ENCODE measurements at regions of chr10 and their contacts with region 1.

Region 1: DNA sequence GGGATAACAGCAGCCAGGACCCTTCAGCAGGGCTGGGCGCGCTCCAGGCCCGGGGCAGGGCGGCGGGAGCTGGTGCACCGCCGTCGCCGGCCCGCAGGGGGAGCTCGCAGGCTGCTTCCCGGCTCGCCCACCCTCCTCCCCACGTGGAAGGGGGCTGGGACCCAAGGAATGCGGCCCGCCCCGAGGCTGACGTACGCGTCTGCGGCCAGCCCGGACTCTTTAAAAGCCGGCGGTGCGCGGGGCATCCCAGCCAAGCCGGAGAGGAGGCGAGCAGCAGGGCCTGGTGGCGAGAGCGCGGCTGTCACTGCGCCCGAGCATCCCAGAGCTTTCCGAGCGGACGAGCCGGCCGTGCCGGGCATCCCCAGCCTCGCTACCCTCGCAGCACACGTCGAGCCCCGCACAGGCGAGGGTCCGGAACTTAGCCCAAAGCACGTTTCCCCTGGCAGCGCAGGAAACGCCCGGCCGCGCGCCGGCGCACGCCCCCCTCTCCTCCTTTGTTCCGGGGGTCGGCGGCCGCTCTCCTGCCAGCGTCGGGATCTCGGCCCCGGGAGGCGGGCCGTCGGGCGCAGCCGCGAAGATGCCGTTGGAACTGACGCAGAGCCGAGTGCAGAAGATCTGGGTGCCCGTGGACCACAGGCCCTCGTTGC is at the start of gene PFKFB3:
- DNase-seq: peak; percentile 79 to 93 (median 86)
- ATAC-seq: peak; percentile 51 to 60
- H3K4me3 Mint-ChIP-seq: peak within 1 kb of the TSS; percentile 86 to 99 (median 96)
- H3K27ac Mint-ChIP-seq: peak within 1 kb of the TSS; percentile 82 to 97 (median 94)
- H3K4me1 Mint-ChIP-seq: peaks cover 11 to 32% (median 29%) of the 10 kb centered on the region in 4 donors
- H3K27me3 Mint-ChIP-seq: no peaks in the 10 kb centered on the region
- polyA plus RNA-seq, gene PFKFB3: 1.6 to 7.1 (median 4.8) TPM

Region 2: DNA sequence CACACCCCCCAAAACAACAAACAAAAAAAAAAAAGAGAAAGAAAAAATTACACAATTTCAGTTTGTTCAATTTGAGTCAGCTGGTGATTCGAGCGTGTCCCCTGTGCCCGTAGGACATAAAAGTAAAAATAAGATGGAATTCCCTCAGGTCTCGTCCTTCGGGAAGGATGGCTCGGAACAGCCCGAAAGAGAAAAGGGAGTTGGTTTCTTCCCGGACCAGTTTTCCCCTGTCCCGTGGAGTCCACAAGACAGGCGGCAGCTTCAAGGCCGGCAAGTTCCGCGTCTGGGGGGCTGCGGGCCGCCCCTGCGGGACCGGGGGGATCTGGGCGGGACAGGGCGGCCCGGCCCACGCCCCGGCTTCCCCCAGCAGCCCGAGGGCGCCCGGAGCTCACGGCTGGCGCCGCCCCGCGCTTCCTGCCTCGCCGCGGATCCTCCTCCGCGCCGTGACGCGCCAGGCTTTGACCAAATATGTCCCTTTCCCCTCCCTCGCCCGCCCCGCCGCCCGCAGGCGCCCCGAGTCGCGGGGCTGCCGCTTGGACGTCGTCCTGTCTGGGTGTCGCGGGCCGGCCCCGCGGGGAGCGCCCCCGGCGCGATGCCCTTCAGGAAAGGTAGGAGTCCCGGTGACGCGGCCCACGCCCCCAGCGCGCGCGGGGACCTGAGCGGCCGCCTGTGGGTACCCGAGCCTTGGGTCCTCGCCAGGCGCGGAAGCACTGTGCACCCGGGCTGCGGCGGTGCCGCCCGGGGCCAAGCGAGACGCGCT is 58.2 kb before region 1 on chr10:
- POLR2A ChIA-PET with region 1: interaction called, 31 read pairs
- DNase-seq: peak; percentile 77 to 91 (median 86)
- ATAC-seq: peak; percentile 90 to 94
- H3K4me3 Mint-ChIP-seq: peak overlapping the region; percentile 80 to 92 (median 86)
- H3K27ac Mint-ChIP-seq: peak overlapping the region; percentile 83 to 93 (median 90)
- H3K4me1 Mint-ChIP-seq: peaks cover 25 to 64% (median 60%) of the 10 kb centered on the region in 4 donors
- H3K27me3 Mint-ChIP-seq: peaks cover 0 to 1% (median 0%) of the 10 kb centered on the region in 5 donors

Region 3: GRCh38 chr10:6171881-6172695 is 30.7 kb before region 1 on chr10:
- POLR2A ChIA-PET with region 1: interaction called, 97 read pairs
- DNase-seq: no peak
- ATAC-seq: no peak
- H3K4me3 Mint-ChIP-seq: peak overlapping the region in 6 of 10 donors; percentile 20 to 78 (median 35)
- H3K27ac Mint-ChIP-seq: peak overlapping the region in 7 of 10 donors; percentile 48 to 94 (median 86)
- H3K4me1 Mint-ChIP-seq: peaks cover 45 to 93% (median 79%) of the 10 kb centered on the region in 4 donors
- H3K27me3 Mint-ChIP-seq: no peaks in the 10 kb centered on the region

Region 4: GRCh38 chr10:6348096-6348874 is 145.5 kb after region 1 on chr10:
- POLR2A ChIA-PET with region 1: interaction called, 63 read pairs
- DNase-seq: peak; percentile 63 to 96 (median 87)
- ATAC-seq: peak; percentile 90 to 92
- H3K4me3 Mint-ChIP-seq: peak overlapping the region; percentile 68 to 87 (median 78)
- H3K27ac Mint-ChIP-seq: peak overlapping the region; percentile 79 to 99 (median 95)
- H3K4me1 Mint-ChIP-seq: peaks cover 39 to 80% (median 63%) of the 10 kb centered on the region in 4 donors
- H3K27me3 Mint-ChIP-seq: no peaks in the 10 kb centered on the region

Region 5: DNA sequence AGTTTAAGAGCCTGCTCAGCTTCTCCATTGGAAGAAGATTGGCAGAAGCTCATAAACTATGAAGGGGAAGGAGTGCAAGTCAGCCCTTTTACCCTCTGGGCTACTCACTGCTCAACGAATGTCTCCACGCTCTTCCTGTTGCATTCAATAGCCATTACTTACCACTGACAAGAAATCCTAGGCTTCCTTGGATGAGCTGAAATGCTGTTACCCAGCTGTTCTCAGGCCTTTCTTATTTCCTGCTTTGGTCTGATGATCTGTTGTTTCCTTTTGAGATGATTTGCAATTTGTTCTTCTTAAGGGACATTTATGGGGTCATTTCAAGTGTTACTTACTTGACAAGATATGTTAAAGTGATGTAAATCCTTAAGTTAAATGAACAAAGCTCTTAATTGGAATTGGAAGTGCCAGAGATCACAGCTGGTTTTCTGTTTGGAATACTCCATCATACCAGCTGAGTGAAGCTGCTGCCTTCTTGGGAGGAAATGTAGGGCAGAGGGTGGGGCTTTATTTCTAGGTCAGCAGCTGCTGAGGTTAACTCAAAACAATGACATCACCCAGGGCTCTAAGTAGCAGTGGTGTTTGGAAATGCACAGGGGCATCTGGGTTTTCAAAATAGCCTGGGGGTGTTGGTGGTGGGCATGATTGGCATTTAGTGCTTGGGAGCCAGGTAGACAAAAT is 207.3 kb after region 1 on chr10:
- POLR2A ChIA-PET with region 1: interaction called, 19 read pairs
- DNase-seq: peak in 8 of 10 donors; percentile 9 to 78 (median 46)
- ATAC-seq: peak; percentile 92 to 97
- H3K4me3 Mint-ChIP-seq: peak overlapping the region; percentile 13 to 74 (median 54)
- H3K27ac Mint-ChIP-seq: peak overlapping the region; percentile 84 to 94 (median 91)
- H3K4me1 Mint-ChIP-seq: peaks cover 15 to 39% (median 29%) of the 10 kb centered on the region in 4 donors
- H3K27me3 Mint-ChIP-seq: no peaks in the 10 kb centered on the region

Measured in naive thymus-derived CD8-positive, alpha-beta T cell (primary cell).